Activated CD4-positive, alpha-beta T cell treated with anti-CD3 and anti-CD28 coated beads, Interleukin-2, amount 10 ng/mL, durations not matched to agents 24 days and 14 days (primary cell): ENCODE measurements at regions of chr18 and their contacts with region 1.

Region 1: GRCh38 chr18:76364282-76365259 is 130.5 kb downstream of the ZNF516 start:
- DNase-seq: peak; percentile 63
- H3K4me3 Mint-ChIP-seq: no peak overlapping the region
- H3K27ac Mint-ChIP-seq: peak overlapping the region; percentile 10
- H3K4me1 Mint-ChIP-seq: peaks cover 7% of the 10 kb centered on the region
- H3K27me3 Mint-ChIP-seq: peaks cover 7% of the 10 kb centered on the region

Region 2: GRCh38 chr18:75854174-75854573 is 510.4 kb before region 1 on chr18:
- intact Hi-C with region 1: no loop called
- DNase-seq: no peak
- H3K4me3 Mint-ChIP-seq: no peak overlapping the region
- H3K27ac Mint-ChIP-seq: no peak overlapping the region
- H3K4me1 Mint-ChIP-seq: no peaks in the 10 kb centered on the region
- H3K27me3 Mint-ChIP-seq: peaks cover 1% of the 10 kb centered on the region

Region 3: DNA sequence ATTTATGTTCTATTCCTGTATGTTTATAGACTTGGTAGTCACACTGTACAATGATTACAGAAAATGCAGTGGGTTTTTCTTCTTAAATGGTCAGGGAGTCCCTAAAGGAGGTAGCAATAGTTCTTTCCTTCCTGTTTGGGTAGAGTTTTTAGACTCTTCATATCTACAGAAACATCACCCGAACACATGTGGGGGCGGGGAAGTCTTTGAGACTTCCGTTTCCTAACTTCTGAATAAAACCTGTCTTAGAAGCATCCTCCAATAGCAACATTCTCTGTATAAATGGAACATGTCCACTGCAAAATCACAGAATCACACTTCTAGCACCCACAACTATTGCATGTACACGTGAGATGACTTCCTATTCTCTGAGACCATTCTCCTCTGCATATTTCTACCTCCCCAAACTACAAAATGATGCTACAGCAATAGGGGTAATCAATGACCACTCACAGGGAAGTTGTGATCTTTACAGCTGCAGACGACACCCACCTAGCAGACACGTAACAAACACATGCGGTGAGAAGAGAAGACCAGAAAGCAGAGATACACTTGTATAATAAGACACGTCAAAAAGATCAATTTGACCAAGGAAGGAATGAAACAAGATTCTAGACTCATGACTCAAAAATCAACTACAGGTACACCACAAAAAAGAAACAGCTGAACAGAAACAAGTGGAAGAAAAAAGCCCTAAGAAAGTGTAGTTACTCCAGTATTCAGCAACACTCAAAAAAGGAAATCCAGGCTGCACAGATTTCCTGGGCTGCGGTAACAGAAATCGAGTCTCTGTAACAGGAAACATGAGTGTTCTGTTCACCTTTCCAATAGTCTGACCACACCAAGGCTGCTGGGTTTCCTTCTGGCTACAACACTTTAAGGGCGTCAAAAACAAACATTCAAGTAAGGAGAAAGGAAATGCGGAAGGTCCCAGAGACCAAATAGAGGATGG is 10.0 kb after region 1 on chr18:
- intact Hi-C with region 1: loop called (anchors 1 kb)
- DNase-seq: peak; percentile 83
- H3K4me3 Mint-ChIP-seq: peak overlapping the region; percentile 44
- H3K27ac Mint-ChIP-seq: peak overlapping the region; percentile 74
- H3K4me1 Mint-ChIP-seq: peaks cover 38% of the 10 kb centered on the region
- H3K27me3 Mint-ChIP-seq: peaks cover 9% of the 10 kb centered on the region

Region 4: GRCh38 chr18:76518123-76518859 is 153.7 kb after region 1 on chr18:
- intact Hi-C with region 1: no loop called
- DNase-seq: no peak
- H3K4me3 Mint-ChIP-seq: peak overlapping the region; percentile 11
- H3K27ac Mint-ChIP-seq: no peak overlapping the region
- H3K4me1 Mint-ChIP-seq: no peaks in the 10 kb centered on the region
- H3K27me3 Mint-ChIP-seq: peaks cover 38% of the 10 kb centered on the region